IMR-90 (cell line): ENCODE measurements at regions of chr14 and their contacts with region 1.

Region 1: GRCh38 chr14:93984987-93985410 is 8.6 kb upstream of the ASB2 start:
- DNase-seq: peak; percentile 91
- ATAC-seq: peak; percentile 77
- H3K4me3 ChIP-seq: no peak overlapping the region
- H3K27ac ChIP-seq: no peak overlapping the region
- H3K4me1 ChIP-seq: peaks cover 33% of the 10 kb centered on the region
- H3K27me3 ChIP-seq: peaks cover 2% of the 10 kb centered on the region; the same call in 1 of the 2 replicates
- CTCF ChIP-seq: peak; percentile 50
- POLR2A ChIP-seq: no peak
- RAD21 ChIP-seq: no peak

Region 2: DNA sequence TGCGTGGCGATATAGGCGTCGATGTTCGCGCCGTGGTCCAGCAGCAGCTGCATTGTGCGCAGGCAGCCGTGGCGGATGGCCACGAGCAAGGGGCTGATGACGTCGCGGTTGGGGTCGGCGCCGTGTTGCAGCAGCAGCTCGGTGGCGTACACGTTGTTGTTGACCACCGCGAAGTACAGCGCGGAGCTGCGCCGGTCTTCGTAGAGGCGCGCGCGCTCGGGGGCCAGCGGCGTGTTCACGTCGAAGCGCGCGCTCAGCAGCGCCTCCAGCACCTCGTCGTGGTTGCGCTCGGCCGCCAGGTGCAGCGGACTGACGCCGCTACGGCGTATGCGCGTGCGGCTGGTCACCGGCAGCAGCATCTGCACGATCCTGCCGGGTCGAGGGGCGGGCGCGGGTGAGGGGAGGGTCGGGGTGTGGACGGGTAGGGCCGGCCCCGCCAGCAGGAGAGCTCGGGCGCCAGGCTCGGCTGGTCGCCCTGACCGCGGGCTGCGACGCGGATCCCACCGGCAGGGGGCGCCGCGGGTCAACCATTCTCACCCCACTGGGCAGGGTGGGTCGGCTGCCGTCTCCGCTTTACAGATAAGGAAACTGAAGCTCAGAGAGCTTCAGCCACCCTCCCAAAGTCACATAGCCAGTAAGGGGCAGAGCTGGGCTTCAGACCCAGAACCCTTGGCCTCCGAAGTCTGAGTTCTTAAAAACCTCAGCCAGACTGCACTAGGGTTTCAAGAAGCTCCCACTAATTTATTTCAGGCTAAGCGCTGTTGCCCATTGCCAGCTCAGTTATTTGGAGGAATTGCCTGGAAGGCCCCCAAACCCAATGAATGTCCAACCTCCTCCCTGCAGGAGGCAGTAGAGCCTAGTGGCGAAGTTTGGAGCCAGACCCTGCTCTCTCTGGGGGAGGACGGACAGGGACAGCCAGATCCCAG is 45.4 kb before region 1 on chr14:
- CTCF ChIA-PET with region 1: interaction called, 14 read pairs
- POLR2A ChIA-PET with region 1: no interaction called
- dilution Hi-C with region 1: no loop called
- in situ Hi-C with region 1: no loop called
- intact Hi-C with region 1: no loop called
- DNase-seq: peak; percentile 67
- ATAC-seq: peak; percentile 90
- H3K4me3 ChIP-seq: peak overlapping the region; percentile 39
- H3K27ac ChIP-seq: no peak overlapping the region
- H3K4me1 ChIP-seq: peaks cover 7% of the 10 kb centered on the region
- H3K27me3 ChIP-seq: peaks cover 31% of the 10 kb centered on the region; the same call in 1 of the 2 replicates
- CTCF ChIP-seq: peak; percentile 98
- POLR2A ChIP-seq: peak; percentile 51; the same call in 1 of the 2 replicates
- RAD21 ChIP-seq: peak; percentile 94

Region 3: GRCh38 chr14:94051115-94051514 is 66.1 kb after region 1 on chr14:
- CTCF ChIA-PET with region 1: no interaction called
- POLR2A ChIA-PET with region 1: no interaction called
- dilution Hi-C with region 1: no loop called
- in situ Hi-C with region 1: no loop called
- intact Hi-C with region 1: no loop called
- DNase-seq: peak; percentile 42
- ATAC-seq: peak; percentile 52; the same call in 1 of the 2 replicates
- H3K4me3 ChIP-seq: no peak overlapping the region
- H3K27ac ChIP-seq: no peak overlapping the region
- H3K4me1 ChIP-seq: no peaks in the 10 kb centered on the region
- H3K27me3 ChIP-seq: no peaks in the 10 kb centered on the region
- CTCF ChIP-seq: peak; percentile 41
- POLR2A ChIP-seq: no peak
- RAD21 ChIP-seq: peak; percentile 49